ENCODE measurements at regions of chr5 and their contacts with region 1.

Region 1: GRCh38 chr5:139446956-139447779 is 7.8 kb upstream of the DNAJC18 start:
- DNase-seq: peak; percentile 68
- H3K4me3 Mint-ChIP-seq: no peak overlapping the region
- H3K27ac Mint-ChIP-seq: peak overlapping the region; percentile 97
- H3K4me1 Mint-ChIP-seq: peaks cover 63% of the 10 kb centered on the region
- H3K27me3 Mint-ChIP-seq: no peaks in the 10 kb centered on the region

Region 2: DNA sequence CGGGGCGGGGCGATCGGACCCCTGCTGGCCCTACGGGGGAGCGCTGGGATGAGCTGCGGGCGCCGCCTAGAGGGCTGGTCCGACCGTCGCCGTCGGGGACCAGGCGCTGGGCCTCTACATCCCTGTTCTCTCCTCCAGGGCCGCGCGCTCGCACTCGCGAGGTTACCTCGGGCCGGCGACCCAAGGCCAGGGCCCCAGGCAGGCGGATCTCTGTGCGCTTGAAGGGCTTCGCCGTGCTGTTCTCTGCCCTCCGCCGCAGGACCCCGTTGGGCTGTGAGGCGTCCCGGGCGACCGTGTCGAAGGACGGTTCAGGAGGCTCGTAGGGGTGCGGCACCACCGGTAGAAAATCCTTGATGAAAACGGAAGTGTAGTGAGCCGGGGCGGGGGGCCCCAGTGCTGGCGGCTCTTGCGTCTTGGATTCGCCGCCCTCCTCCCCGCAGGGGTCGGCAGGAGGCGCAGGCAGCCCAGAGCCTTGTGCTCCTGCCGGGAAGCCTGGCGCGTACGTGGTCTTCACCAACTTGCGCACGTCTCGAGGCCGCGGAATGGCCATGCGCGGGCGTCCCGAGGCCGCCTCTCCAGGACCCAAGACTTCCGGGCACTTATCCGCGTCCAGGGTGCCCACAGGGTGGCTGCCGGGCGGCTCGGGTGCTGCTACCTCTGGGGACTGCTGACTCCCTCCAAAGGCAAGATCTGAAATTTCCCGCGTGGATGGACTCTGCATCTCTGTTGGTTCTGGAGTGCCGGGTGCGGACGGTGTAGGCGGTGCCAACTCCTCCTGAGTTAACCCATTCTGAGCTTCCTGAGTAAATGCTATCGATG is 54.3 kb before region 1 on chr5:
- CTCF ChIA-PET with region 1: no interaction called
- intact Hi-C with region 1: no loop called
- DNase-seq: peak; percentile 86
- H3K4me3 Mint-ChIP-seq: peak overlapping the region; percentile 89
- H3K27ac Mint-ChIP-seq: peak overlapping the region; percentile 78
- H3K4me1 Mint-ChIP-seq: peaks cover 39% of the 10 kb centered on the region
- H3K27me3 Mint-ChIP-seq: no peaks in the 10 kb centered on the region

Region 3: GRCh38 chr5:139430015-139430414 is 17.2 kb before region 1 on chr5:
- CTCF ChIA-PET with region 1: no interaction called
- intact Hi-C with region 1: loop called (anchors 1 kb)
- DNase-seq: no peak
- H3K4me3 Mint-ChIP-seq: no peak overlapping the region
- H3K27ac Mint-ChIP-seq: peak overlapping the region; percentile 77
- H3K4me1 Mint-ChIP-seq: peaks cover 21% of the 10 kb centered on the region
- H3K27me3 Mint-ChIP-seq: no peaks in the 10 kb centered on the region

Region 4: DNA sequence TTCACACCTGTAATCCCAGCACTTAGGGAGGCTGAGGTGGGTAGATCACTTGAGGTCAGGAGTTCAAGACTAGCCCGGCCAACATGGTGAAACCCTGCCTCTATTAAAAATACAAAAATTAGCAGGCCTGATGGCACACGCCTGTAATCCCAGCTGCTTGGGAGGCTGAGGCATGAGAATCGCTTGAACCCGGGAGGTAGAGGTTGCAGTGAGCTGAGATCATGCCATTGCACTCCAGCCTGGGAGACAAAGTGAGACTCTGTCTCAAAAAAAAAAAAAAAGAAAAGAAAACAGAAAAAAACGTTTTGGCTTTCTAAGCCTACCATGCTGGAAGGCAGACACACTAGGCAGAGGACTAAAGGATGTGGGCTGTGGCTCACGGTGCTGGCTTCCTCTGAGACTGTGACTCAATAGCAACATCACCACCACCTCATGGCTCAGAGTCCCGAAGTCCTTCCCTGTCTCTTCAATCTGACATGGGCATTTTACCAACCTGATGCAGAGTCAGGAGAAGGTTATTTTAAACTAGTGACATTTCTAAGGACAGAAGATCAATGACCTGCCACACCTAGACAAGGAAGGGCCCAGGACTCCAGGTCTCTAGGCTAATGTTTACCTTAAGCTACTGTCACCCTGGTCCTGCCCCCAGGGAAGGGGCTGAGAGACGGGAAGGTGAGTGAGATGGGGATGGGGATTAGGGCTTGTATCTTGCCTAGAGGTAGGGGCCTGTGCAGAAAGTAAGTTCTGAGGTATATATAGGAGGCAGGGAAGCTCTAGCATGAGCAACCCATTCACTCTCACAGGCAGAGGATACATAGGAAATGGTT is 11.6 kb after region 1 on chr5:
- CTCF ChIA-PET with region 1: interaction called, 4 read pairs
- intact Hi-C with region 1: loop called (anchors 1 kb)
- DNase-seq: peak; percentile 93
- H3K4me3 Mint-ChIP-seq: peak overlapping the region; percentile 50
- H3K27ac Mint-ChIP-seq: peak overlapping the region; percentile 94
- H3K4me1 Mint-ChIP-seq: peaks cover 54% of the 10 kb centered on the region
- H3K27me3 Mint-ChIP-seq: no peaks in the 10 kb centered on the region

Region 5: GRCh38 chr5:139495638-139496435 is 48.7 kb after region 1 on chr5:
- CTCF ChIA-PET with region 1: no interaction called
- intact Hi-C with region 1: no loop called
- DNase-seq: peak; percentile 46
- H3K4me3 Mint-ChIP-seq: no peak overlapping the region
- H3K27ac Mint-ChIP-seq: no peak overlapping the region
- H3K4me1 Mint-ChIP-seq: peaks cover 23% of the 10 kb centered on the region
- H3K27me3 Mint-ChIP-seq: no peaks in the 10 kb centered on the region